Activated B cell treated with CpG ODN at 0.5 μM for 24 hours (primary cell): ENCODE measurements at regions of chr18 and their contacts with region 1.

Region 1: DNA sequence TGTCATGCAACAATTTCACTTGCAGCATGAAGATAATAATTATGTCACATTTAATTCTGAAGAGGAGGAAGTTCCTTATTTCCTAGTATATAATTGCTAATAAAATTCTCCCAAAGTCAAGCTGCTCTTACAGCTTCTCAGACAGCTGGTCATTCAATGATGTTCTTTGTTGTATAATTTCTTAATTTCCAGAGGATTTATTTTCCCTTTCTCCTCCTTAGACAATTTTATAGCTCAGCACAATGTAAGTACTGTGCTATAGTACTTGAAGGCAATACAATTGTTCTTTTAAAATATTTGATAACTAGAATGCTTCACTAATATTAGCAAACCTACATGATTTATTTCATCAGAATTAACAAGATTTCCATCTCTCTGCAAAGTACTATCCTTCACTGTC is 73.4 kb downstream of the ROCK1 start:
- DNase-seq: no peak
- ATAC-seq: no peak
- H3K4me3 Mint-ChIP-seq: no peak overlapping the region
- H3K27ac Mint-ChIP-seq: no peak overlapping the region
- H3K4me1 Mint-ChIP-seq: peaks cover 3% of the 10 kb centered on the region
- H3K27me3 Mint-ChIP-seq: no peaks in the 10 kb centered on the region
- CTCF ChIP-seq: no peak

Region 2: GRCh38 chr18:21053127-21053526 is 14.9 kb after region 1 on chr18:
- CTCF ChIA-PET with region 1: no interaction called
- POLR2A ChIA-PET with region 1: interaction called, 3 read pairs
- intact Hi-C with region 1: loop called (anchors 2 kb)
- DNase-seq: no peak
- ATAC-seq: no peak
- H3K4me3 Mint-ChIP-seq: no peak overlapping the region
- H3K27ac Mint-ChIP-seq: no peak overlapping the region
- H3K4me1 Mint-ChIP-seq: peaks cover 35% of the 10 kb centered on the region
- H3K27me3 Mint-ChIP-seq: no peaks in the 10 kb centered on the region
- CTCF ChIP-seq: no peak

Region 3: GRCh38 chr18:21074336-21075323 is 36.4 kb after region 1 on chr18:
- CTCF ChIA-PET with region 1: no interaction called
- POLR2A ChIA-PET with region 1: no interaction called
- intact Hi-C with region 1: loop called (anchors 5 kb)
- DNase-seq: no peak
- ATAC-seq: no peak
- H3K4me3 Mint-ChIP-seq: peak overlapping the region; percentile 48
- H3K27ac Mint-ChIP-seq: peak overlapping the region; percentile 13
- H3K4me1 Mint-ChIP-seq: peaks cover 81% of the 10 kb centered on the region
- H3K27me3 Mint-ChIP-seq: no peaks in the 10 kb centered on the region
- CTCF ChIP-seq: no peak

Region 4: GRCh38 chr18:21330122-21330701 is 292.0 kb after region 1 on chr18:
- CTCF ChIA-PET with region 1: no interaction called
- POLR2A ChIA-PET with region 1: no interaction called
- intact Hi-C with region 1: no loop called
- DNase-seq: no peak
- ATAC-seq: no peak
- H3K4me3 Mint-ChIP-seq: no peak overlapping the region
- H3K27ac Mint-ChIP-seq: no peak overlapping the region
- H3K4me1 Mint-ChIP-seq: no peaks in the 10 kb centered on the region
- H3K27me3 Mint-ChIP-seq: no peaks in the 10 kb centered on the region
- CTCF ChIP-seq: no peak

Region 5: GRCh38 chr18:21538230-21538629 is 500.0 kb after region 1 on chr18:
- CTCF ChIA-PET with region 1: no interaction called
- POLR2A ChIA-PET with region 1: no interaction called
- intact Hi-C with region 1: no loop called
- DNase-seq: no peak
- ATAC-seq: no peak
- H3K4me3 Mint-ChIP-seq: no peak overlapping the region
- H3K27ac Mint-ChIP-seq: no peak overlapping the region
- H3K4me1 Mint-ChIP-seq: no peaks in the 10 kb centered on the region
- H3K27me3 Mint-ChIP-seq: no peaks in the 10 kb centered on the region
- CTCF ChIP-seq: no peak